K562 (cell line): ENCODE measurements at regions of chr10 and their contacts with region 1.

Region 1: GRCh38 chr10:23994479-23995046 is 214.4 kb upstream of the KIAA1217 start:
- DNase-seq: peak; percentile 37 to 61 (median 52)
- ATAC-seq: peak; percentile 75
- H3K4me3 ChIP-seq: no peak overlapping the region
- H3K27ac ChIP-seq: no peak overlapping the region
- H3K4me1 ChIP-seq: no peaks in the 10 kb centered on the region
- H3K27me3 ChIP-seq: no peaks in the 10 kb centered on the region
- CTCF ChIP-seq: peak; percentile 53 to 65 (median 63)
- EP300 ChIP-seq: no peak
- POLR2A ChIP-seq: no peak
- RAD21 ChIP-seq: peak; percentile 44 to 73

Region 2: GRCh38 chr10:23864631-23865147 is 129.9 kb before region 1 on chr10:
- CTCF ChIA-PET with region 1: no interaction called
- POLR2A ChIA-PET with region 1: no interaction called
- in situ Hi-C with region 1: no loop called
- intact Hi-C with region 1: no loop called
- DNase-seq: no peak
- ATAC-seq: no peak
- H3K4me3 ChIP-seq: no peak overlapping the region
- H3K27ac ChIP-seq: no peak overlapping the region
- H3K4me1 ChIP-seq: no peaks in the 10 kb centered on the region
- H3K27me3 ChIP-seq: no peaks in the 10 kb centered on the region
- CTCF ChIP-seq: no peak
- EP300 ChIP-seq: no peak
- POLR2A ChIP-seq: no peak
- RAD21 ChIP-seq: no peak

Region 3: DNA sequence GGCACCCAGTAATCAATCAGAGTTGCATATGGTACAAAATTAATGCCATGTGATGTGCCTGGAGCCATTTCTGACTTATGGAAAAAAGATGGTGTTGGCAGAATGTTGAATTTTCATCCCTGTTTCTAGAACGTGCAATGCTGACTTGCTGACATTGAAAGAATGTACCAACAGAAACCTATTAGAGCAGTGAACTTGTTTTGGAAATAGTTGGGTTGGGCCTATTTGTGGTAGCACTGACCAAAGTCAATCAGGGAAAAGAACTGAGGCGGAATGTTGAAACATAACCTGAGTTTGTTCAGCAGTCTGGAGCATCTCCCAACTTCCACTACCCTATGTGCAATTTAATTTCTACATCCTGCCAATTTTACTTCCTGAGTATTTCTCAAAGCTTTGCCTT is 202.7 kb after region 1 on chr10:
- CTCF ChIA-PET with region 1: no interaction called
- POLR2A ChIA-PET with region 1: no interaction called
- in situ Hi-C with region 1: no loop called
- intact Hi-C with region 1: loop called (anchors 10 kb)
- DNase-seq: no peak
- ATAC-seq: no peak
- H3K4me3 ChIP-seq: no peak overlapping the region
- H3K27ac ChIP-seq: no peak overlapping the region
- H3K4me1 ChIP-seq: no peaks in the 10 kb centered on the region
- H3K27me3 ChIP-seq: no peaks in the 10 kb centered on the region
- CTCF ChIP-seq: no peak
- EP300 ChIP-seq: no peak
- POLR2A ChIP-seq: no peak
- RAD21 ChIP-seq: no peak

Region 4: DNA sequence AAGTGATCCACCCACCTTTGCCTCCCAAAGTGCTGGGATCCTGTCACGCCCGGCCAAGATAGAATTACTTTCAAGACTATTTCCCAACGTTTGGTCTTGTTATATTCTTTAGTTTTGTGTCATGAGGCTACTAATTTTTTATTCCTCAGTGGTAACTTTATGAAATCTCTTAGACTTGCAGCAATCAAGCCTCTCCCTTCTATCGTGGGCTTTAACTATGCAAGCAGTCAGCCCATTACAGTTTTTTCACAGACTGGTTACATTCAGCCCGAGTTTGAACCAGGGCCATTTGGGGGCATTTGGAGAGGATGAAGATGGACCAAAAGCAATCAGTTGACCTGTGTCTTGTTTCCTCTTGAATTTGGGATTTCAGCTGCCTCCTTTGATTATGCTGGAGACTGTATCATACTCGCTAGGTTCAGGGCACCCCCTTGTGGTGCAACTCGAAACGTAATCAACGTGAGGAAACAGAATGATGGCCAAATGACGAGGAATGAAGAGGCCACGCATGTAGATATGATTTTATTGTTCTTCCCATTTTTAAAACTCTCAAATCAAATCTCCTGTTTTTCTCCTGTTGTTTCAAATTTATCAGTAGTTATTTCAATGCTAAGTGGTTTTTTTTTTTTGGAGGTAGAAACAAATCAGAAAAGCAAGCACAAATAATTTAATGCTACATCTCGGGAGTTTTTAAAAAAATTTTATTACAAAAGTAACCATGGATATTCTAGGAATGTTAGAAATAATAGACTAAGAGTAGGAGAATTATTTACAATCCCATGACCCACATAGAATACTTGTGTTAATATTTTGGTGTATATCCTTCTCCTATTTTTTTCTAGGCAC is 365.9 kb after region 1 on chr10:
- CTCF ChIA-PET with region 1: no interaction called
- POLR2A ChIA-PET with region 1: no interaction called
- in situ Hi-C with region 1: no loop called
- intact Hi-C with region 1: loop called (anchors 2 kb)
- DNase-seq: peak; percentile 39 to 57 (median 44)
- ATAC-seq: peak; percentile 88
- H3K4me3 ChIP-seq: no peak overlapping the region
- H3K27ac ChIP-seq: no peak overlapping the region
- H3K4me1 ChIP-seq: no peaks in the 10 kb centered on the region
- H3K27me3 ChIP-seq: 0 out of 5 replicates have a peak, but pooled peaks cover 0 to 8% of the 10 kb centered on the region in 2 experiments
- CTCF ChIP-seq: peak; percentile 46 to 67 (median 65)
- EP300 ChIP-seq: no peak
- POLR2A ChIP-seq: no peak
- RAD21 ChIP-seq: peak; percentile 37 to 59; a peak in 3 of 4 replicates

Region 5: GRCh38 chr10:24383681-24384106 is 389.1 kb after region 1 on chr10:
- CTCF ChIA-PET with region 1: no interaction called
- POLR2A ChIA-PET with region 1: no interaction called
- in situ Hi-C with region 1: no loop called
- intact Hi-C with region 1: loop called (anchors 5 kb)
- DNase-seq: peak; percentile 74 to 80 (median 77)
- ATAC-seq: peak; percentile 95
- H3K4me3 ChIP-seq: no peak overlapping the region
- H3K27ac ChIP-seq: no peak overlapping the region
- H3K4me1 ChIP-seq: no peaks in the 10 kb centered on the region
- H3K27me3 ChIP-seq: peaks cover 0 to 6% of the 10 kb centered on the region in 2 experiments; a peak in 3 of 5 replicates
- CTCF ChIP-seq: peak; percentile 57 to 70 (median 65)
- EP300 ChIP-seq: no peak
- POLR2A ChIP-seq: no peak
- RAD21 ChIP-seq: peak in 1 of 2 experiments; percentile 58; a peak in 2 of 4 replicates

Region 6: DNA sequence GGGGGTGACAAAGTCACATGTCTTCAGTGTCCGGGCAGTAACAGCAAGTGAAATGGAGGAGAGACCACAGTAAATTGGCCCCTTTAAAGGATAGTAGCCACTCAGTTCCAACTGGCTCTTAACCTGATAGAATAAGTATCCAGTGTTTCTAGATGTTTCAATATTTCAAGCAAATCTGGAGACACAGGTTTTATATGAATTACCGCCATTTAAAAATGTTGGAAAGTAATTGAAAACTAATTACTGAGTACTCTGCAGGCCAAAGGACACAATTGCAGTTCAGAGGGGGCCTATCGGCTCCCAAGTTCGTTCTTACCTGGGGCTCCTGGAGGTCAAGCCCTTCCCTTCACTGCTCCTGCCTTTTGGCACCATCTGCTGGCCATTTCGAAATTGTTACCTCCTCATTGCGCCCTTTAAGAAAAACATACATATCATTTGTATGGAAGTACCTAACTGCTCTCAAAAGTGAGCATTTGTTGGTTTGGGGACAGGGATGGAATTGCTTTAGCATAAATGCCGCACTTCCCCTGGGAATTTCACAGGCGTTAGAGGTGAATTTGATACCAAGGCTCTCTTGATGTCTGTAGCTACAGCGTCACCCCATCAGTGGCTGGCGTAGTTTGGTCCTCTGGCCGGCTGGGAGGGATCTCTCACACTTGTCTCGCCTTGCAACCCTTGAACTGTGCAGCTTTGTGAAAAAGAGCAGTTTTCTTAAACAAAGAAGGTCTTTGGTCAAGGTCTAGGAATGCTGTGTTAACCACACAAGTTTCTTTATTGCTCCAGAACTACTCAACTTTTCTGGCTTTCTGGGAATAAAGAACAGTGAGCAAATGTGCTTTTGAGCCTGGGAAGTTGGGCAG is 509.1 kb after region 1 on chr10:
- CTCF ChIA-PET with region 1: no interaction called
- POLR2A ChIA-PET with region 1: no interaction called
- in situ Hi-C with region 1: no loop called
- intact Hi-C with region 1: loop called (anchors 2 kb)
- DNase-seq: peak; percentile 41 to 66 (median 58)
- ATAC-seq: peak; percentile 89
- H3K4me3 ChIP-seq: no peak overlapping the region
- H3K27ac ChIP-seq: no peak overlapping the region
- H3K4me1 ChIP-seq: no peaks in the 10 kb centered on the region
- H3K27me3 ChIP-seq: peaks cover 4 to 24% of the 10 kb centered on the region in 2 experiments; a peak in 3 of 5 replicates
- CTCF ChIP-seq: peak; percentile 68 to 72 (median 68)
- EP300 ChIP-seq: no peak
- POLR2A ChIP-seq: no peak
- RAD21 ChIP-seq: peak; percentile 70 to 76

Region 7: DNA sequence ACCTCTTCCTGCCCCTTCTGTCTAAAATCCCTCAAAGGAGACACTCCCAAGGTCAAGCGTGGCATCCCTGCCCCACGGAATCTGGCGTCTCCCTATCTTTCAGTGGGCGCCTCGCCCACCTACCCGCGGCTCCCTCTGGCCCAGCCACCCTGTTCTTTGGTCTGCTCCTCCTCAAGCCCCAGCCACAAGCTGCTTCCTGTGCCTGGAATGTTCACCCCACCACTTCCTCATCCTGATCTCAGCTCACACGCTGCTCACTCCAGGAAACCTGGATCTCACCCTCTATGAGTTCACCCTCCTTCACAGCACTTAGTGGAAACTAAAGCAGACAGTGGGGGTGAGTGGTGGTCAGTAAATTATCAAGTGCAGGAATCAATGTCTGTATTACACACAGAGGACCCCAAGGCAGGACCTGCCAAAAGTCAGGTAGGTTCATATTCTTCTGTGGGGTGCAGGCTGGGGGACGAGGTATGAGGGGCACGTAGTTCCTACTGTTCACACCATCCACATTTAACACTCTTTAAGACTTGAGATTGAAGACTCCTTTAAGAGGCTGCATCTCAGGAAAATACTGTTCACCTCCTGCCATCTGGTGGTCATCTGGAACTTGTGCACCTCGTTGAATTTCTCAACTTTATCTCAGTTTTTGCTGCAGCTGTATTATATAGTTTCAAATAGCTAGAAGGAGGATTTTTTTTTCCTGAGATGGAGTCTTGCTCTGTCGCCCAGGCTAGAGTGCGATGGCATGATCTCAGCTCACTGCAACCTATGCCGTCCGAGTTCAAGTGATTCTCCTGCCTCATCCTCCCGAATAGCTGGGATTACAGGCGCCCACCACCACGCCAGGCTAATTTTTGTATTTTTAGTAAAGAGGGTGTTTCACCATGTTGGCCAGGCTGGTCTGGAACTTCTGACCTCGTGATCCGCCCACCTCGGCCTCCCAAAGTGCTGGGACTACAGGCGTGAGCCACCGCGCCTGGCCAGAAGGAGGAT is 562.5 kb after region 1 on chr10:
- CTCF ChIA-PET with region 1: no interaction called
- POLR2A ChIA-PET with region 1: no interaction called
- in situ Hi-C with region 1: no loop called
- intact Hi-C with region 1: no loop called
- DNase-seq: peak; percentile 47 to 77 (median 51)
- ATAC-seq: peak; percentile 71
- H3K4me3 ChIP-seq: no peak overlapping the region
- H3K27ac ChIP-seq: no peak overlapping the region
- H3K4me1 ChIP-seq: peaks cover 4 to 5% of the 10 kb centered on the region in 2 experiments; a peak in 4 of 5 replicates
- H3K27me3 ChIP-seq: peaks cover 7 to 19% of the 10 kb centered on the region in 2 experiments; a peak in 3 of 5 replicates
- CTCF ChIP-seq: peak; percentile 71 to 78 (median 73)
- EP300 ChIP-seq: no peak
- POLR2A ChIP-seq: no peak
- RAD21 ChIP-seq: peak; percentile 58 to 77